GM12878 (cell line): ENCODE measurements at regions of chr22 and their contacts with region 1.

Region 1: GRCh38 chr22:42437488-42438292 is 5.5 kb upstream of the NFAM1 start:
- DNase-seq: peak; percentile 84
- ATAC-seq: peak; percentile 76
- H3K4me3 ChIP-seq: peak overlapping the region; percentile 78
- H3K27ac ChIP-seq: peak overlapping the region; percentile 81
- H3K4me1 ChIP-seq: peaks cover 13% of the 10 kb centered on the region
- H3K27me3 ChIP-seq: no peaks in the 10 kb centered on the region
- CTCF ChIP-seq: peak; percentile 92 to 98 (median 98)
- EP300 ChIP-seq: peak; percentile 61 to 71; a peak in 2 of 4 replicates
- POLR2A ChIP-seq: no peak
- RAD21 ChIP-seq: peak; percentile 97

Region 2: DNA sequence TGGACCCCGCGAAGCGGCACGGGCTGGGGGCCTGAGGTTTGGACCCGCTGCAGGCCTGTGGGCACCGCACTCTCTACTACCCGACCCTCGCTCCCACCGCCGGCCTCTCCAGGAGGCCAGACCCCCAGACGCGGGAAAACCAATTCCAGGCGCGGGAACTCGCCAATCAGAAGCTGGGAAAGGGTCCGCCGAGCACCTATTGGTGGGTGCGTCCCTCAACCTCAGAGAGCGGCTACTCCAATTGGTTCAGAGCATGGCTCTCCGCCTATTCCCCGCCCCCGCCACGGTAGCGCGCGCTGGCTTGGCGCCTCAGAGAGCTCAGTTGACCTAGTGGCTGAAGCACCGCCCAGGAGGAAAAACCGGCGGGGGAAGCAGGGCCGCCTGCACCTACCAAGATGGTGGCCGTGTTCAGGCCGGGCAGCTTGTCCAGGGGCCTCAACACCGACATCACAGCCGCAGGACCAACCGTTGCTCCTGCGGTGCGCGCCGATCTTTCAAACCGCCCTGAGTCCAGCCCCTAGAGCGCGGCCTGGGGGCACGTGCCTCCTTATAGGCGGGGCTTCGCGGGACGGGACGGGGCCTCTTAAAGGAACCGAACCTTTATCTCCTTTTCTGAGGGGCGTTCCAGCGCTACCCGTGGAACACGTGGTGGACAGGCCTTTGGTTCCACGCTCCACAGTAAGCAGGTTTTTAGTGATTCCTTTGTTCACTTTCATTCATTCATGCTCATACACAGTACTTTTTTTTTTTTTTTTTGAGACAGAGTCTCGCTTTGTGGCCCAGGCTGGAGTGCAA is 490.9 kb before region 1 on chr22 and contains the start of gene CENPM:
- CTCF ChIA-PET with region 1: interaction called, 3 read pairs
- POLR2A ChIA-PET with region 1: interaction called, 4 read pairs
- RAD21 ChIA-PET with region 1: interaction called, 3 read pairs
- SMC1A ChIA-PET with region 1: no interaction called
- in situ Hi-C with region 1: no loop called
- intact Hi-C with region 1: loop called (anchors 5 kb)
- DNase-seq: peak; percentile 80
- ATAC-seq: peak; percentile 88
- H3K4me3 ChIP-seq: peak within 1 kb of the TSS; percentile 78
- H3K27ac ChIP-seq: peak within 1 kb of the TSS; percentile 94
- H3K4me1 ChIP-seq: peaks cover 59% of the 10 kb centered on the region
- H3K27me3 ChIP-seq: no peaks in the 10 kb centered on the region
- CTCF ChIP-seq: no peak
- EP300 ChIP-seq: no peak
- POLR2A ChIP-seq: peak; percentile 83
- RAD21 ChIP-seq: no peak
- polyA plus RNA-seq, gene CENPM: 36.7 to 62.3 TPM

Region 3: DNA sequence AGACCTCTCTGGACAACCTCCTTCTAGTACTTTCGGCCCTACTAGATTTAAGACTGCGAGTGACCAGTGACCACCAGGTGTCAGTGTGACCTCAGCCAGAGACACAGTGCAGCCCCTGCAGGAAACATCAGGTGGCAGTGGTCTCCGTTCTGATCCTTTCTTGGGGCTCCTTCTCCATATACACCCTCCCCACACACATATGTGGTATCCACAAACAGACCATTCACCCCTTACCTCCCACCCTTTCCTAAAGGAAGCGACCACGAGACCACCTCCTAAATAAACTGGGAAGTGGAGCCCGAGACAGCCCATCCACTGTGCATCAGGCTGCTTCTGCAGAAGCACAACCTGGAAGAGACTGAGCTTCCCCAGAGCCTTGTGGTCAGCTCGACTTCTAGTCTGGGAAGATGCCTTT is 268.6 kb before region 1 on chr22:
- CTCF ChIA-PET with region 1: interaction called, 133 read pairs
- POLR2A ChIA-PET with region 1: interaction called, 4 read pairs
- RAD21 ChIA-PET with region 1: interaction called, 34 read pairs
- SMC1A ChIA-PET with region 1: interaction called, 132 read pairs
- in situ Hi-C with region 1: loop called (anchors 5 kb)
- intact Hi-C with region 1: loop called (anchors 1 kb)
- DNase-seq: peak; percentile 51
- ATAC-seq: peak; percentile 97
- H3K4me3 ChIP-seq: no peak overlapping the region
- H3K27ac ChIP-seq: no peak overlapping the region
- H3K4me1 ChIP-seq: peaks cover 10% of the 10 kb centered on the region
- H3K27me3 ChIP-seq: no peaks in the 10 kb centered on the region
- CTCF ChIP-seq: peak; percentile 93 to 100 (median 96); a peak in 5 of 6 replicates
- EP300 ChIP-seq: no peak
- POLR2A ChIP-seq: no peak
- RAD21 ChIP-seq: peak; percentile 100

Region 4: DNA sequence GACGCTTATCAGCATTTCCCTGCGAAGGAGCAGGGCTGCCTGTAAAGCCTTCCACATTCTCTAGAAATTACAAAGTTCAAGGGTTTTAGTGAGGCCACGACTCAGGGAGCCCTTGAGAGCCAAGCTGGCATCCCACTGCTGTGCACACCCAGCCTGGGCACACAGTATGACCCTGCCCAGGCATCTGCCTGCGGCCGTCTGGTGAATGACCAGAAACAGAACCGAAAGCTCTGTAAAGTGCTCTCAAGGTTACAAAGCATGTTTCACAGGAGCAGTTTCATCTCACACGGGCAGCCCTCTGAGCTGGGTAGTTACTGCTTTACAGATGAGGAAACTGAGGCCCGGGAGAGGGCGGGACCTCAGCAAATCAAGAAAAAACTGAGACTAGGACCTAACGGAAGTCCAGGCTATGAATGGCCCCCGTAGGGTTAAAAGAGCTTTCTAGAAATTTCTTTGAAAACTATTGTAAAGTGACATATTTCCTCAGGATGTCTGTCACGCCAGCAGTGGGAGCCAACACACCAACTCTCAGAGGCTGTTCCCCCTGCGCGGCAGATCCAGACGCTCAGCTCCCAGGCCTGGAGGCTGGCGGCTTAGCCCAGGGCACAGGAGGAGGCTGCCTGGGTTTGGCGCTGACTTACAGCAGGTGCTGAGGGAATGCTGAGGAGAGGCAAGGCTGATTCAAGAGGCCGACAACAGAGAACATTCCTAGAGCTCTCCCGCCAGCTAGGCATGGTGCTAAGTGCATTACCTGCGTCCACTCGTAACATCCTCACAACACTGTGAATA is 159.5 kb before region 1 on chr22:
- CTCF ChIA-PET with region 1: interaction called, 25 read pairs
- POLR2A ChIA-PET with region 1: interaction called, 7 read pairs
- RAD21 ChIA-PET with region 1: interaction called, 9 read pairs
- SMC1A ChIA-PET with region 1: interaction called, 16 read pairs
- in situ Hi-C with region 1: no loop called
- intact Hi-C with region 1: no loop called
- DNase-seq: no peak
- ATAC-seq: peak; percentile 94
- H3K4me3 ChIP-seq: no peak overlapping the region
- H3K27ac ChIP-seq: no peak overlapping the region
- H3K4me1 ChIP-seq: peaks cover 15% of the 10 kb centered on the region
- H3K27me3 ChIP-seq: no peaks in the 10 kb centered on the region
- CTCF ChIP-seq: peak; percentile 26 to 53 (median 39); a peak in 4 of 6 replicates
- EP300 ChIP-seq: no peak
- POLR2A ChIP-seq: no peak
- RAD21 ChIP-seq: peak; percentile 60

Region 5: DNA sequence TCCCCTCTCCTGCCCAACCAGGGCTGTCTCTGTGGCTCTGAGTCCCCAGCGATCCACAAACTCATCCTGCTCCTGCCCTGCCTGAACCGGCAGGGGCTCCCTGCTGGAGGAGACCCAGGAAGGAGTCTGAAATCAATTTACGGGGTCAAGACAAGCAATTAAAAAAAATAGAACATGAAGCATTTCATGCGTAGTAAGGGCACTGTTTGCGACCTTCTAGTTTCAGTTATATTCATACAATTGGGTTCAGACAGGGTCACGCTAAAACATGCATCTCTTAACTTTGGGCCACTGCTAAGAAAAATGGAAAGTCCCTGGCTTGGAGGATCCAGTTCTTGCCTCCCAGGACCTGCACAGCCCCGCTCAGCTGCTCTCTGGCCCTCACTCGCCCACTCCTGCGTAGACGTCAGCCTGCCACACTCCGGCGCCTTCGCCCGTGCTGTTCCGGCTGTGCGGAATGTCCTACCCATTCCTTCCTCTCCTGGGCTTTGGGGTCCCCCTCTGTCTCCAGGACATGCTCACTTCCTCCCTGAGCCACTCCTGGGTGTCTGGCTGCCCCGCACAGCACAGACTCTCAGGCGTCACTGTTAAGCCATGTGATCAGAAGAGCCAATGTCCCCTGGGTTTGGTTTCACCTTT is 18.3 kb before region 1 on chr22:
- CTCF ChIA-PET with region 1: interaction called, 13 read pairs
- POLR2A ChIA-PET with region 1: interaction called, 38 read pairs
- RAD21 ChIA-PET with region 1: interaction called, 33 read pairs
- SMC1A ChIA-PET with region 1: interaction called, 20 read pairs
- in situ Hi-C with region 1: no loop called
- intact Hi-C with region 1: no loop called
- DNase-seq: peak; percentile 72
- ATAC-seq: peak; percentile 92
- H3K4me3 ChIP-seq: peak overlapping the region; percentile 36; the same call in 1 of the 2 replicates
- H3K27ac ChIP-seq: peak overlapping the region; percentile 80
- H3K4me1 ChIP-seq: peaks cover 27% of the 10 kb centered on the region
- H3K27me3 ChIP-seq: no peaks in the 10 kb centered on the region
- CTCF ChIP-seq: no peak; a peak in 1 of 6 replicates
- EP300 ChIP-seq: peak; percentile 64 to 74; a peak in 3 of 4 replicates
- POLR2A ChIP-seq: peak; percentile 60
- RAD21 ChIP-seq: no peak

Region 6: GRCh38 chr22:42577623-42578240 is 140.0 kb after region 1 on chr22:
- CTCF ChIA-PET with region 1: no interaction called
- POLR2A ChIA-PET with region 1: no interaction called
- RAD21 ChIA-PET with region 1: no interaction called
- SMC1A ChIA-PET with region 1: no interaction called
- in situ Hi-C with region 1: no loop called
- intact Hi-C with region 1: no loop called
- DNase-seq: no peak
- ATAC-seq: no peak
- H3K4me3 ChIP-seq: no peak overlapping the region
- H3K27ac ChIP-seq: no peak overlapping the region
- H3K4me1 ChIP-seq: no peaks in the 10 kb centered on the region; the same call in 1 of the 2 replicates
- H3K27me3 ChIP-seq: no peaks in the 10 kb centered on the region
- CTCF ChIP-seq: no peak
- EP300 ChIP-seq: no peak
- POLR2A ChIP-seq: no peak; the same call in 1 of the 2 replicates
- RAD21 ChIP-seq: no peak

Region 7: GRCh38 chr22:42614312-42615091 is 176.8 kb after region 1 on chr22 and contains the start of gene POLDIP3:
- CTCF ChIA-PET with region 1: interaction called, 21 read pairs
- POLR2A ChIA-PET with region 1: no interaction called
- RAD21 ChIA-PET with region 1: interaction called, 3 read pairs
- SMC1A ChIA-PET with region 1: no interaction called
- in situ Hi-C with region 1: no loop called
- intact Hi-C with region 1: loop called (anchors 5 kb)
- DNase-seq: peak; percentile 78
- ATAC-seq: peak; percentile 79
- H3K4me3 ChIP-seq: peak within 1 kb of the TSS; percentile 94
- H3K27ac ChIP-seq: peak within 1 kb of the TSS; percentile 100
- H3K4me1 ChIP-seq: peaks cover 17% of the 10 kb centered on the region
- H3K27me3 ChIP-seq: no peaks in the 10 kb centered on the region
- CTCF ChIP-seq: peak; percentile 5 to 38 (median 36); a peak in 4 of 6 replicates
- EP300 ChIP-seq: 0 out of 4 replicates have a peak, but pooled peaks of 1 of the 2 experiments have one; percentile 13
- POLR2A ChIP-seq: peak; percentile 78
- RAD21 ChIP-seq: no peak
- polyA plus RNA-seq, gene POLDIP3: 14.8 to 19.3 TPM